PC-9 (cell line): ENCODE measurements at regions of chr18 and their contacts with region 1.

Region 1: DNA sequence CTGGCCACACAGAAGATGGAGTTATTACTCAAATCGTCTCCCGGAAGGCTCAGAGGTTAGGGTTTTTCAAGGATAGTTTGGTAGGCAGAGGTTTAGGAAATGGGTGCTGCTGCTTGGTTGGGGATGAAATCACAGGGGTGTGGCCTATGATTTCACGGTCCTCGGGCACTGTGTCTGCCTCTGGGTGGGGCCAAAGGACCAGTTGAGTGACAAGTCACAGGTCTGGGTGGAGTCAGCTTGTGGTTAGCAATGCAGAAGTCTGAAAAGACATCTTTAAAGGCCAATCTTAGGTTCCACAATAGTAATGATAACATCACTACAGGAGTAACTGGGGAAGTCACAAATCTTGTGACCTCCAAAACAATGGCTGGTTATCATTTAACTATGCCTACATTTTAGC is 387.8 kb downstream of the ZNF521 start:
- DNase-seq: no peak
- H3K4me3 ChIP-seq: no peak overlapping the region
- H3K27ac ChIP-seq: no peak overlapping the region
- H3K4me1 ChIP-seq: no peaks in the 10 kb centered on the region
- H3K27me3 ChIP-seq: no peaks in the 10 kb centered on the region
- CTCF ChIP-seq: no peak

Region 2: GRCh38 chr18:24189007-24189528 is 775.1 kb before region 1 on chr18:
- CTCF ChIA-PET with region 1: interaction called, 20 read pairs
- POLR2A ChIA-PET with region 1: no interaction called
- intact Hi-C with region 1: no loop called
- DNase-seq: no peak
- H3K4me3 ChIP-seq: no peak overlapping the region
- H3K27ac ChIP-seq: no peak overlapping the region
- H3K4me1 ChIP-seq: no peaks in the 10 kb centered on the region
- H3K27me3 ChIP-seq: no peaks in the 10 kb centered on the region
- CTCF ChIP-seq: no peak